Panc1 (cell line): ENCODE measurements at regions of chr6 and their contacts with region 1.

Region 1: GRCh38 chr6:57097596-57097995 is 7.6 kb downstream of the ZNF451 start:
- DNase-seq: no peak
- ATAC-seq: no peak
- H3K4me3 ChIP-seq: no peak overlapping the region
- H3K27ac ChIP-seq: no peak overlapping the region
- H3K4me1 ChIP-seq: peaks cover 7% of the 10 kb centered on the region; the same call in 1 of the 2 replicates
- H3K27me3 ChIP-seq: no peaks in the 10 kb centered on the region
- CTCF ChIP-seq: no peak

Region 2: GRCh38 chr6:56984361-56984760 is 113.2 kb before region 1 on chr6:
- CTCF ChIA-PET with region 1: no interaction called
- POLR2A ChIA-PET with region 1: no interaction called
- in situ Hi-C with region 1: no loop called
- intact Hi-C with region 1: no loop called
- DNase-seq: no peak
- ATAC-seq: no peak
- H3K4me3 ChIP-seq: no peak overlapping the region
- H3K27ac ChIP-seq: no peak overlapping the region
- H3K4me1 ChIP-seq: no peaks in the 10 kb centered on the region
- H3K27me3 ChIP-seq: no peaks in the 10 kb centered on the region
- CTCF ChIP-seq: no peak

Region 3: GRCh38 chr6:57147955-57148858 is 50.6 kb after region 1 on chr6:
- CTCF ChIA-PET with region 1: no interaction called
- POLR2A ChIA-PET with region 1: no interaction called
- in situ Hi-C with region 1: no loop called
- intact Hi-C with region 1: no loop called
- DNase-seq: no peak
- ATAC-seq: no peak
- H3K4me3 ChIP-seq: no peak overlapping the region
- H3K27ac ChIP-seq: no peak overlapping the region
- H3K4me1 ChIP-seq: no peaks in the 10 kb centered on the region
- H3K27me3 ChIP-seq: no peaks in the 10 kb centered on the region
- CTCF ChIP-seq: no peak

Region 4: DNA sequence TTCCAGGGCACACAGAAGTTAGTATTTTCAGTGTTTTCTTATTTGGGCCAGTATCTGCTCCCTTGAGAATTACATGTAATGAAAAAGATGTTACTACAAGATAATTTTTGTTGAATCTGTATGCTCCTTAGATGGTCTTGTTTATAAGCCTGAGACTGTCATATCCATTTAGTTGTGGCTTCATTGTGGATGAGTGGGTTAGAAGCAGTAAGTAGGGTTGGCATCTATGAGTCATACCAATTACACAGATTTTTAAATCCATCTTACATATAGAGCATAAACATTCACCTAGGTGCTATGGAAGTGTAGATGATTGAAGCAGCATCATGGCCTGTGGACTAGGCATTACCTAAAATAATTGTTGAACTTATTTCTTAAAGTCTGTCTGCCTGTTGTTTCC is 61.1 kb after region 1 on chr6:
- CTCF ChIA-PET with region 1: no interaction called
- POLR2A ChIA-PET with region 1: interaction called, 15 read pairs
- in situ Hi-C with region 1: no loop called
- intact Hi-C with region 1: no loop called
- DNase-seq: no peak
- ATAC-seq: no peak
- H3K4me3 ChIP-seq: no peak overlapping the region
- H3K27ac ChIP-seq: no peak overlapping the region
- H3K4me1 ChIP-seq: no peaks in the 10 kb centered on the region
- H3K27me3 ChIP-seq: no peaks in the 10 kb centered on the region
- CTCF ChIP-seq: no peak

Region 5: DNA sequence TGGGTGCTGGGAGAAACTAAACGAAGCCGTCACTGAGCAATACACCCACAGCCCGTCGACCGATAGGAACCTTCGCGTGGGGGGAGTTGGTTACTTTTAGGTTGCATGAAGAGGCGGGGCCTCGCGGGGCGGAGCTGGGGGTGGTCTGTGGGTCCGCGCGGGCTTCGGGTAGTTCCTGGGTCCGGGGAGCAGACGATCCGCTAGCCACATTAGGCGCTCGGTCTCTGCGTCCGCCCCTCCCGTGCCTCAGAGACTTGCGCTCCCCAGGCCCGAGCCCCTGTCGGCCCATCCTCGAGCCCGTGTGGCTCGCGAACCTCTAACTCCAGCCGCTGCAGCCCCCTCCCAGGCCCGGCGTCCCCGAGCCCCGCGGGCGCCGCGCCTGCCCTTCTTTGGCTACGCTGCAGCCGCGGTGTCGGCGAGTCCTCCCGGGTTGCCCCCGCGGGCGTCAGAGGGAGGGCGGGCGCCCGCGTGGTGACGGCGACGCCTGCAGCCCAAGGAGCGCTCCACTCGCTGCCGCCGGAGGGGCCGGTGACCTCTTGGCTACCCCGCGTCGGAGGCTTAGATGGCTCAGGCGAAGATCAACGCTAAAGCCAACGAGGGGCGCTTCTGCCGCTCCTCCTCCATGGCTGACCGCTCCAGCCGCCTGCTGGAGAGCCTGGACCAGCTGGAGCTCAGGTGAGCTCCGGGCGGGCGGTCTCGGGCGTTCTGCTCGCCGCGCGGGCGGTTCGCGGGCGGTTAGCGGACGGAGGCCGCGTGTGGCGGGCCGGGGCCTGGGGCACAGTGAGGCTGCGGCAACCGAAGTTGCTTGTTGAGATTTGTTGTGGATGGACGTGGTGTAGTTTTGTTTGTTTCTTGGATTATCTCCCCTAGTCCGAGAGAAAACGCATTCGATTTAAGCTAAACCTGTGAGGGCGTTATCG is 74.8 kb after region 1 on chr6 and contains the start of gene BAG2:
- CTCF ChIA-PET with region 1: no interaction called
- POLR2A ChIA-PET with region 1: interaction called, 11 read pairs
- in situ Hi-C with region 1: no loop called
- intact Hi-C with region 1: no loop called
- DNase-seq: peak; percentile 63
- ATAC-seq: peak; percentile 96
- H3K4me3 ChIP-seq: peak within 1 kb of the TSS; percentile 89 to 92
- H3K27ac ChIP-seq: peak within 1 kb of the TSS; percentile 95
- H3K4me1 ChIP-seq: peaks cover 46% of the 10 kb centered on the region
- H3K27me3 ChIP-seq: no peaks in the 10 kb centered on the region
- CTCF ChIP-seq: 0 out of 2 replicates have a peak, but pooled peaks have one; percentile 21
- total RNA-seq, gene BAG2: 14.0 TPM